ENCODE measurements at regions of chr1 and their contacts with region 1.

Region 1: GRCh38 chr1:94045465-94046056 is 75.4 kb downstream of the ABCA4 start:
- DNase-seq: peak; percentile 86 to 94
- ATAC-seq: peak; percentile 93
- H3K4me3 ChIP-seq: no peak overlapping the region
- H3K27ac ChIP-seq: peak overlapping the region in 1 of 2 donors; percentile 23
- H3K4me1 ChIP-seq: peaks cover 2 to 6% of the 10 kb centered on the region in 2 donors
- H3K27me3 ChIP-seq: no peaks in the 10 kb centered on the region

Region 2: DNA sequence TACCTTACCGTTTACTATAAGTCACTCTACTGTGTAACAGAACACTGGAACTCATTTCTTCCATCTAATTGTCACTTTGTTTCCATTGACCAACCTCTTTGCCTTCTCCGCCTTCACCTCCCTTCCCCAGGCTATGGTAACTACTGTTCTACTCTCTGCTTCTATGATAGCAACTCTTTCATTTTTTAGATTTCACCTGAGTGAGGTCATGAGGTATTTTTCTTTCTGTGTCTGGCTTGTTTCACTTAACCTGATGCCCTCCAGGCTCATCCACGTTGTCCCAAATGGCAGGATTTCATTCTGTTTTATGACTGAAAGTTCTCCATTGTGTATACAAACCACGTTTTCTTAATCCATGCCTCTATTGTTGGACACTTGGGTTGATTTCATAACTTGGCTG is 100.9 kb before region 1 on chr1:
- intact Hi-C with region 1: no loop called
- DNase-seq: no peak
- ATAC-seq: no peak
- H3K4me3 ChIP-seq: no peak overlapping the region
- H3K27ac ChIP-seq: no peak overlapping the region
- H3K4me1 ChIP-seq: no peaks in the 10 kb centered on the region
- H3K27me3 ChIP-seq: no peaks in the 10 kb centered on the region

Region 3: DNA sequence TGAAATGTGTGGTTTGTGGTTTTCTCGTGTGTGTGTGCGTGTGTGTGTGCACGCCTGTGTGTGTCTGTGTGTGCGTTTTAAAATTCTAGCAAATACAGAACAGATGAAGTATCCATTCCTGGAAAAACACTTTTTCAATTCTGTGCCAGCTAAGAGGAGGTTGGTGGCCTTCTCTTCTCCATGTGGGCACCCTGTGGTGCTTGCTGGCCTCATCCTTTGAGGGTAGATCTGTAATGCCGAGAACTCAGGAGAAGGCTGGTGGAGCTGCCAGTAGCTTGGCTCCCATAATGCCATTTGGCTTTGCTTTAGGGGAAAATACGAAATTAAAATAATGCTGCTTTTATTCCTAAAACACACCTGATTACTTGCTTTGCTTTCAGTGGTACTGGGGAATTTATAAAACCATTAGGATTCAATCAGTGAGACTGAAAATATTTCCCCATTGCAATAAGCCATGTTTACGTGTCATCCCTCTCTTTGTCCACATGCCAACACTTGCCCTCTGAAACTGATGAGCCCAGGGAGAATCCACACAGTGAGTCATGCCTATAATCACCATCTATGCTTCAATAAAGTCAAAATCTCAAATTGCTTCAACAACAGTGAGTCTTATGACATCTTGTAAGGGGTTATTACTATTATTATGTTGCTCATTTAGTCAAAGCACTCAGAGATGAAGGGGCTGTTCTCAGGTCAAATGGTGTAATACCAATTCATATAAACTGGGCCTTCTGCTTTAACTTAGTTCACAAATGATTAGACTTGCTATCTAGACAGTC is 36.2 kb after region 1 on chr1:
- intact Hi-C with region 1: no loop called
- DNase-seq: no peak
- ATAC-seq: no peak
- H3K4me3 ChIP-seq: no peak overlapping the region
- H3K27ac ChIP-seq: no peak overlapping the region
- H3K4me1 ChIP-seq: no peaks in the 10 kb centered on the region
- H3K27me3 ChIP-seq: no peaks in the 10 kb centered on the region

Region 4: GRCh38 chr1:94237291-94238226 is 192.0 kb after region 1 on chr1 and contains the start of gene ARHGAP29:
- intact Hi-C with region 1: loop called in 1 of 2 experiments (anchors 5 kb)
- DNase-seq: peak; percentile 86 to 94
- ATAC-seq: peak; percentile 95
- H3K4me3 ChIP-seq: peak within 1 kb of the TSS; percentile 45 to 60
- H3K27ac ChIP-seq: peak within 1 kb of the TSS in 1 of 2 donors; percentile 73
- H3K4me1 ChIP-seq: peaks cover 0 to 3% of the 10 kb centered on the region in 2 donors
- H3K27me3 ChIP-seq: peaks cover 0 to 2% of the 10 kb centered on the region in 2 donors
- total RNA-seq, gene ARHGAP29: 40.1 to 65.4 TPM

Region 5: GRCh38 chr1:94247138-94248094 is 201.9 kb after region 1 on chr1:
- intact Hi-C with region 1: loop called in 1 of 2 experiments (anchors 5 kb)
- DNase-seq: peak; percentile 81 to 93
- ATAC-seq: peak; percentile 93
- H3K4me3 ChIP-seq: peak overlapping the region; percentile 5 to 90
- H3K27ac ChIP-seq: peak overlapping the region in 1 of 2 donors; percentile 0
- H3K4me1 ChIP-seq: peaks cover 0 to 3% of the 10 kb centered on the region in 2 donors
- H3K27me3 ChIP-seq: no peaks in the 10 kb centered on the region

Region 6: DNA sequence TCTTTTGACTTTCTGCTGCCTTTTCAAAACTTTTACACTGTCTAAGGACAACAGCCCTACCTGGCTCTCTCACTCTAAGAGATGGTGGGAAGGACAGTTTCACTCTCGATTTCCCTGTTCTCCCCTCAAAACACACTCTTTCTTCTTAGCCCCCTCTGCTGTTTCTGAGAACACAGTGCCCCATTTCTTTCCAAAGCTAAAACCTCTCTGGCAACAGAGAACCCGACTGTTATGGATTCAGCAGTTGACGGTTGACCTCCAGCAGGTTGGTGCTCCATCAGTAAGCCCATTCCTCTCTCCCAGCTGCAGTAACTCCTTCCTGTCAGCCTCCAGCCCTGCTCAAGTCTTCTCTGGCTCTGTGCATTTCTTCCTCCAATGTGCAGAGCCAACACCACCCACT is 284.4 kb after region 1 on chr1:
- intact Hi-C with region 1: loop called (anchors 5 kb)
- DNase-seq: no peak
- ATAC-seq: peak; percentile 46
- H3K4me3 ChIP-seq: no peak overlapping the region
- H3K27ac ChIP-seq: no peak overlapping the region
- H3K4me1 ChIP-seq: peaks cover 3 to 5% of the 10 kb centered on the region in 2 donors
- H3K27me3 ChIP-seq: no peaks in the 10 kb centered on the region

Region 7: GRCh38 chr1:94335950-94336349 is 290.4 kb after region 1 on chr1:
- intact Hi-C with region 1: loop called (anchors 5 kb)
- DNase-seq: peak in 1 of 2 donors; percentile 69
- ATAC-seq: peak; percentile 93
- H3K4me3 ChIP-seq: no peak overlapping the region
- H3K27ac ChIP-seq: no peak overlapping the region
- H3K4me1 ChIP-seq: no peaks in the 10 kb centered on the region
- H3K27me3 ChIP-seq: no peaks in the 10 kb centered on the region

Region 8: GRCh38 chr1:94463765-94464330 is 418.3 kb after region 1 on chr1:
- intact Hi-C with region 1: loop called in 1 of 2 experiments (anchors 10 kb)
- DNase-seq: no peak
- ATAC-seq: peak; percentile 50
- H3K4me3 ChIP-seq: no peak overlapping the region
- H3K27ac ChIP-seq: no peak overlapping the region
- H3K4me1 ChIP-seq: no peaks in the 10 kb centered on the region
- H3K27me3 ChIP-seq: no peaks in the 10 kb centered on the region

Measured in aorta (tissue), 5 donors.